ENCODE measurements at regions of chr21 and their contacts with region 1.

Region 1: DNA sequence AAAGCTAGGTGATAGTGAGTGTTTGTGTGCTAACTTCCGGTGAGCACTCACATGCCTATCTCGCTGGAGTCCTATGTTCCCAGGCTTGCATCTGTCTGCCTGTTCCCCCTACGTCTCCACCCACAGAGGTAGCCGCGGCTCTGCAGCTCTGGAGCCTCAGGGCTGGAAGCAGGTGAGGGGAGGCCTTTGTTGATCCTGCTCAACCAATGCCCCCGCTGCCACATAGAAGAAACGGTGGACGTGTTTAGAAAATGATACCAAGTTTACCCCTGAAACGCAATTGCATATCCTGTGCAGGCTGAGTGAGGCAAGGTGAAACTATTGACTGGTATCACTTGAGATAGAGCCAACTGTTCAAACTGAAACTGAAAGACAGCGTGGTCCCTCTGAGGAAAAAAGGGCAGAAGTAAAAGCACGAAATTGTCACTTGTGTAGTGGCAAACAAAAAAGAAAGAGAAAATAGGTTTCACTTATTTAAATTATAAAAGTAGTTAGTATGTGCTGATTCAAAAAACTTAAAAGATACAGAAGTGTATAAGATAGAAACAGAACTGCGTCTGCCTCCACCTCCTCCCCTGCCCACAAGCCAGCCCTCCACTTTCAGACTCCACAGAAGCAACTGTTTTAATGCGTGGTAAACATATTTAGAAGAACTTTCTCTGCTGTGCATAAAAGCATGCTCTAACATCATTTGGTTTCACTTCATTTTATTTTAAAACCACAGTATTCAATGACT is 38.6 kb upstream of the ETS2 start:
- DNase-seq: peak; percentile 75
- H3K4me3 Mint-ChIP-seq: peak overlapping the region; percentile 66
- H3K27ac Mint-ChIP-seq: peak overlapping the region; percentile 92
- H3K4me1 Mint-ChIP-seq: peaks cover 43% of the 10 kb centered on the region
- H3K27me3 Mint-ChIP-seq: peaks cover 2% of the 10 kb centered on the region

Region 2: DNA sequence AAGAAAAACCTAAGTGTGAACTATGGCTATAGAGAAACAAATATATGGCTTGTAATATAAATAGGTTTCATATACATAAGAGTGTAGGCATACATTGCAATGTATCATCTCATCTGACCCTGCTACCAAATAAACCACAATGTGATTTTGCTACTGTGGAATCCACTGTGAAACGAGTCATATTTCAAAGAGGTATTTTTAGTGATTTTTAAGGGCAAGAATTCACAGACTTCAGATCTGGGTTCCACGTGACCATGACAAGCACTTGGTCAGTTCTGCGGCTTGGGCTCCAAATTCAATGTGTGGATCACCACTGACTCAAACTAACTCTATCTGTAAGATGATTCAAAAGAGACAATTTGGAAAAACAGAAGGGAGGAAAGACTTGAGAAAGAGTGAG is 121.9 kb before region 1 on chr21:
- intact Hi-C with region 1: loop called (anchors 1 kb)
- DNase-seq: no peak
- H3K4me3 Mint-ChIP-seq: no peak overlapping the region
- H3K27ac Mint-ChIP-seq: peak overlapping the region; percentile 81
- H3K4me1 Mint-ChIP-seq: peaks cover 22% of the 10 kb centered on the region
- H3K27me3 Mint-ChIP-seq: peaks cover 5% of the 10 kb centered on the region

Region 3: GRCh38 chr21:38831526-38832467 is 64.6 kb after region 1 on chr21:
- intact Hi-C with region 1: loop called (anchors 2 kb)
- DNase-seq: peak; percentile 59
- H3K4me3 Mint-ChIP-seq: no peak overlapping the region
- H3K27ac Mint-ChIP-seq: peak overlapping the region; percentile 50
- H3K4me1 Mint-ChIP-seq: peaks cover 16% of the 10 kb centered on the region
- H3K27me3 Mint-ChIP-seq: no peaks in the 10 kb centered on the region

Region 4: DNA sequence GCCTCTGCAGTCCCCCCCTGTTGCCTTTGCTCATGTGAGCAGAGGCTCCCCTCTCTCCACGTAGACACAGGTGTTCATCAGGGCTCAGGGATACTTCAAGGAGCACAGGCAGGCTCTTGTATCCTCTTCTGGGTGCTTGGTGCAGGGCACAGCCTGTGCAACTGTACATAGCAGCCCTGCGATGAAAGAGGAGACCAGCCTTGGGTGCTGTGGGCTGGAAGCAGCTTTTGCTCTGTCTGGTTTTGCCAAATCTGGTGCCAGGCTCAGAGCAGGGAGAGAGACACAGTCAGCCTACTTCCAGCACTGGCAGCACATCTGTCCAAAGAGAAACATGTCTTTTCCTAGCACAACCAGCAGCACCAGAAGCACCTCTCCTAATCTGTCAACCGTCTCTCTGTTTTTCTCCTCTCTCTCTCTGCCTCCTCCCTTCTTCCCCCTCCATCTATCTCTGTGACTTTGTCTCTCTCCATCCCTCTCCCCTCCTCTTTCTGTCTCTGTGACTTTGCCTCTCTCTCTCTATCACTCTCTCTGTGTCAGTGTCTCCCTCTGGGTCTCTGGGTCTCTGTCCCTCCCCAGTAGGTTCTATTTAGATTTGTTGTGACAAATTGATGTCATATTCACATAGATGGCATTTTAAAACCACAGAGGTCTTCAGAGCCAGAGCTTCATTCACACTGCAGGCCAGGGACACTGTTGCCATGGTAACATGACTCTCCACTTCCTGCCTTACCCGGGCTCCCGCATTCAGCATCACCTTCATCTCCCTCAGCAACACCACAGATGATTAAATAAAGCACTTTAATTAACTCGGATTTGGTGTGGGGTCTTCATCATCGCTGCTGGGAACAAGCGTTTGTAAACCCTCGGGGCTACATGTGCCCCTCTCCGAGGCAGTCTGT is 170.9 kb after region 1 on chr21:
- intact Hi-C with region 1: loop called (anchors 2 kb)
- DNase-seq: peak; percentile 70
- H3K4me3 Mint-ChIP-seq: peak overlapping the region; percentile 65
- H3K27ac Mint-ChIP-seq: peak overlapping the region; percentile 96
- H3K4me1 Mint-ChIP-seq: peaks cover 34% of the 10 kb centered on the region
- H3K27me3 Mint-ChIP-seq: no peaks in the 10 kb centered on the region

Region 5: GRCh38 chr21:38950435-38951094 is 183.4 kb after region 1 on chr21:
- intact Hi-C with region 1: no loop called
- DNase-seq: no peak
- H3K4me3 Mint-ChIP-seq: no peak overlapping the region
- H3K27ac Mint-ChIP-seq: no peak overlapping the region
- H3K4me1 Mint-ChIP-seq: peaks cover 15% of the 10 kb centered on the region
- H3K27me3 Mint-ChIP-seq: no peaks in the 10 kb centered on the region

Region 6: GRCh38 chr21:38985568-38986378 is 218.6 kb after region 1 on chr21:
- intact Hi-C with region 1: loop called (anchors 1 kb)
- DNase-seq: peak; percentile 72
- H3K4me3 Mint-ChIP-seq: peak overlapping the region; percentile 65
- H3K27ac Mint-ChIP-seq: peak overlapping the region; percentile 97
- H3K4me1 Mint-ChIP-seq: peaks cover 67% of the 10 kb centered on the region
- H3K27me3 Mint-ChIP-seq: no peaks in the 10 kb centered on the region